ENCODE measurements at regions of chr15 and their contacts with region 1.

Region 1: GRCh38 chr15:68775671-68776476 is 44.8 kb downstream of the ANP32A start:
- DNase-seq: peak; percentile 73 to 96
- H3K4me3 ChIP-seq: no peak overlapping the region
- CTCF ChIP-seq: no peak
- POLR2A ChIP-seq: no peak

Region 2: GRCh38 chr15:70044168-70044567 is 1268.3 kb after region 1 on chr15:
- intact Hi-C with region 1: loop called (anchors 5 kb)
- DNase-seq: no peak
- H3K4me3 ChIP-seq: no peak overlapping the region
- CTCF ChIP-seq: no peak
- POLR2A ChIP-seq: no peak

Measured in lower leg skin (tissue), 4 donors.